ENCODE measurements at regions of chrX and their contacts with region 1.

Region 1: GRCh38 chrX:109732780-109733657 is at the start of gene ACSL4:
- DNase-seq: peak; percentile 95
- H3K4me3 Mint-ChIP-seq: peak within 1 kb of the TSS; percentile 99
- H3K27ac Mint-ChIP-seq: peak within 1 kb of the TSS; percentile 99
- H3K4me1 Mint-ChIP-seq: peaks cover 21% of the 10 kb centered on the region
- H3K27me3 Mint-ChIP-seq: no peaks in the 10 kb centered on the region
- total RNA-seq, gene ACSL4: 75.9 and 87.5 TPM in 2 replicates

Region 2: GRCh38 chrX:109403927-109404326 is 329.1 kb before region 1 on chrX:
- intact Hi-C with region 1: no loop called
- DNase-seq: no peak
- H3K4me3 Mint-ChIP-seq: no peak overlapping the region
- H3K27ac Mint-ChIP-seq: no peak overlapping the region
- H3K4me1 Mint-ChIP-seq: no peaks in the 10 kb centered on the region
- H3K27me3 Mint-ChIP-seq: no peaks in the 10 kb centered on the region

Region 3: GRCh38 chrX:109536439-109537336 is 196.3 kb before region 1 on chrX and contains the start of gene NXT2:
- intact Hi-C with region 1: loop called (anchors 10 kb)
- DNase-seq: peak; percentile 95
- H3K4me3 Mint-ChIP-seq: peak within 1 kb of the TSS; percentile 98
- H3K27ac Mint-ChIP-seq: peak within 1 kb of the TSS; percentile 99
- H3K4me1 Mint-ChIP-seq: peaks cover 14% of the 10 kb centered on the region
- H3K27me3 Mint-ChIP-seq: peaks cover 4% of the 10 kb centered on the region
- total RNA-seq, gene NXT2: 12.5 and 14.1 TPM in 2 replicates

Region 4: GRCh38 chrX:109709129-109709631 is 23.8 kb before region 1 on chrX:
- intact Hi-C with region 1: loop called (anchors 1 kb)
- DNase-seq: no peak
- H3K4me3 Mint-ChIP-seq: peak overlapping the region; percentile 53
- H3K27ac Mint-ChIP-seq: peak overlapping the region; percentile 81
- H3K4me1 Mint-ChIP-seq: peaks cover 54% of the 10 kb centered on the region
- H3K27me3 Mint-ChIP-seq: no peaks in the 10 kb centered on the region

Region 5: GRCh38 chrX:109840585-109840984 is 107.6 kb after region 1 on chrX:
- intact Hi-C with region 1: loop called (anchors 1 kb)
- DNase-seq: peak; percentile 52
- H3K4me3 Mint-ChIP-seq: no peak overlapping the region
- H3K27ac Mint-ChIP-seq: no peak overlapping the region
- H3K4me1 Mint-ChIP-seq: peaks cover 7% of the 10 kb centered on the region
- H3K27me3 Mint-ChIP-seq: no peaks in the 10 kb centered on the region

Region 6: DNA sequence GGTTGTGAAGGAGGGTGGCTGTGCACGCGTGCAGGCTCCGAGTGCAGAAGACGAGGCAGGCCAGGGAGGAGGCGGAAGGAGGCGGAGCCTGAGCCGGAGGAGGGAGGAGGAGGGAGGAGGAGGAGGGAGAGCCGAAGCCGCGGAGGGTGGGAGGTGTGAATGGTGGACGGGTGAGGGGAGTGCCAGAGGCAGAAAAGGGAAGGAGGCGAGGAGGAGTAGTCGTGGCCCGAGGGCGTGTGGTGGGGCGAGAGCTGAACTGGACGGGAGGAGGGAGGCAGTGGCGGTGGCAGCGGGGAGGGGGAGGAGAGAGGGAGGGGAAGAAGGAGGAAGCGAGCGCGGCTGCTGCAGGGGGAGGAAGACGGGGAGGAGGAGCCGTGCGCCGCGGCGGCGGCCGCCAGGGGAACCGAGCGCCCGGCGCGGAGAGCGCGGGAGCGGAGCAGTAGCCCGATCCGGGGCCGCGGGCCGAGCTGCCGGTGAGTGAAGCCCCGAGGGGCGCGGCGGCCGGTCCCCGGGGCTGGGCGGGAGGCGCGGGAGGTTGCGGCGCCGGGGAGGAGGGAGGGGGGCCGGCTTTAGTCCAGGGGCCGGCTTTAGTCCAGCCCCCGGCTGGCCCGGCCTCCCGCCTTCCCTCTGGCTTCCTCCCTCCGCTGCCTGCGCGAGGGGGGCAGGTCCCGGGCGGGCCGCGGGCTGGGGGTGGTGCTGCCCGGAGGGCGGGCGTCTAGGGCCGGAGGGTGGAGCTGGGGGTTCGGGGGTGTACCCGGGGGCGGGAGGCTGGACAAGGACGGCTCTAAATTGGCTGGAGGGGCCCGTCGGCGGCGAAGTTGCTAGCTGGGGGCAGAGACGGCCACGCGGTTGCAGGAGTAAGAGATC is 269.5 kb after region 1 on chrX and contains the start of gene TMEM164:
- intact Hi-C with region 1: loop called (anchors 10 kb)
- DNase-seq: peak; percentile 94
- H3K4me3 Mint-ChIP-seq: peak within 1 kb of the TSS; percentile 89
- H3K27ac Mint-ChIP-seq: peak within 1 kb of the TSS; percentile 96
- H3K4me1 Mint-ChIP-seq: peaks cover 28% of the 10 kb centered on the region
- H3K27me3 Mint-ChIP-seq: no peaks in the 10 kb centered on the region
- total RNA-seq, gene TMEM164: 14.9 and 18.3 TPM in 2 replicates